Naive thymus-derived CD4-positive, alpha-beta T cell (primary cell): ENCODE measurements at regions of chr13 and their contacts with region 1.

Region 1: DNA sequence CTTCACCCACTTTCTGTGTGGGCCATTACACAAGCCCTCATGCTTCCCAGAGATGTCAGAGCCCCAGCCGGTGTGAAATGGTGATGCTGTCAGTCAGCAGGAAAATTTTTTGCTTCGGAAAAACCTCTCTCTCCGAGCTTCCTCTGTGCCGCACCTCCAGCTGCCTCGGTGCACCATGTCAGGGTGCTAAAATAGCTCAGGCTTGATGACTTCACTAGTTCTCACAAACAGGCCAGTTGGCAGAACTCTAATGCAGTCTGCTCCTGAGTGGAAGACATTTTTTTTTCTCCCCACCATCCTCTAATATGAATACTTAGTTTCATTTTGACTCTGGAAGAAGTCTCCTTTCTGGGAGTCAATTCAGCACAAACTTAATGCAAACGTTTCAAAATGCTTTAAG is 71.3 kb downstream of the KLF12 start:
- DNase-seq: peak in 1 of 9 donors; percentile 24
- ATAC-seq: peak; percentile 5
- H3K4me3 ChIP-seq: no peak overlapping the region
- H3K4me3 Mint-ChIP-seq: peak overlapping the region; percentile 26 to 80 (median 64)
- H3K27ac ChIP-seq: no peak overlapping the region
- H3K27ac Mint-ChIP-seq: peak overlapping the region; percentile 58 to 86 (median 81)
- H3K4me1 ChIP-seq: peaks cover 52 to 73% of the 10 kb centered on the region in 2 donors
- H3K4me1 Mint-ChIP-seq: peaks cover 50 to 95% (median 91%) of the 10 kb centered on the region in 7 donors
- H3K27me3 ChIP-seq: no peaks in the 10 kb centered on the region
- H3K27me3 Mint-ChIP-seq: no peaks in the 10 kb centered on the region

Region 2: DNA sequence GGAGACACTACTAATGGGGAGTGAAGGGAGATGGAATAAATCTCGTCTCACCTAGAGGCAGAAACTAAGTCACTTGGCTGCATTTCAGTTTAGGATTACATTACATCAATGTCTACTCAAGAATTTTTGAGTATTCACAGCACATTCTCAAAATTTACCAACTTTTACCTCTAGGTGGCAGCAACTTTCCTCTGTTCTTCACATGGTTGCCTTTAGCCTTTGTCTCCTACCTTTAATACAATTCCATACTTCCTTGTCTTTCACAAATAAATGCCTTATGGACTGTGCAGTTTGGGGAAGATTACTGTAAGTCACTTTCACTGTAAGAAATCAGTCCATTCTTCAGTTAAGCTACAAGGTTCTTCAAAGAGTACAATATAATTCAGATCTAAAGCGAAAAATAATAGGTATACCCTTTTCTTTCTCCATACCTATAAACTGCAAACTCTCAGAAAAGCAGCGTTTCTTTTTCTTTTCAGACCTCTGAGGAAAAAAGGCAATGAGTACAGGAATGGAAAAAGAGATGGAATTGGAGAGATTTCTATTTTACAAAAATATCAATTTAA is 308.1 kb before region 1 on chr13:
- CTCF ChIA-PET with region 1: no interaction called
- POLR2A ChIA-PET with region 1: no interaction called
- intact Hi-C with region 1: loop called in 1 of 2 experiments (anchors 5 kb)
- DNase-seq: peak in 7 of 9 donors; percentile 32 to 69 (median 59)
- ATAC-seq: peak; percentile 67
- H3K4me3 ChIP-seq: no peak overlapping the region
- H3K4me3 Mint-ChIP-seq: peak overlapping the region in 1 of 10 donors; percentile 5
- H3K27ac ChIP-seq: no peak overlapping the region
- H3K27ac Mint-ChIP-seq: peak overlapping the region; percentile 11 to 96 (median 79)
- H3K4me1 ChIP-seq: peaks cover 0 to 19% of the 10 kb centered on the region in 2 donors
- H3K4me1 Mint-ChIP-seq: peaks cover 13 to 76% (median 57%) of the 10 kb centered on the region in 7 donors
- H3K27me3 ChIP-seq: no peaks in the 10 kb centered on the region
- H3K27me3 Mint-ChIP-seq: no peaks in the 10 kb centered on the region

Region 3: GRCh38 chr13:74026753-74027152 is 36.2 kb before region 1 on chr13:
- CTCF ChIA-PET with region 1: interaction called, 3 read pairs
- POLR2A ChIA-PET with region 1: no interaction called
- intact Hi-C with region 1: loop called (anchors 5 kb)
- DNase-seq: peak; percentile 22 to 77 (median 68)
- ATAC-seq: peak; percentile 94
- H3K4me3 ChIP-seq: peak overlapping the region; percentile 21
- H3K4me3 Mint-ChIP-seq: peak overlapping the region; percentile 77 to 92 (median 84)
- H3K27ac ChIP-seq: peak overlapping the region; percentile 77
- H3K27ac Mint-ChIP-seq: peak overlapping the region; percentile 80 to 97 (median 94)
- H3K4me1 ChIP-seq: peaks cover 51 to 59% of the 10 kb centered on the region in 2 donors
- H3K4me1 Mint-ChIP-seq: peaks cover 36 to 97% (median 94%) of the 10 kb centered on the region in 7 donors
- H3K27me3 ChIP-seq: no peaks in the 10 kb centered on the region
- H3K27me3 Mint-ChIP-seq: no peaks in the 10 kb centered on the region

Region 4: DNA sequence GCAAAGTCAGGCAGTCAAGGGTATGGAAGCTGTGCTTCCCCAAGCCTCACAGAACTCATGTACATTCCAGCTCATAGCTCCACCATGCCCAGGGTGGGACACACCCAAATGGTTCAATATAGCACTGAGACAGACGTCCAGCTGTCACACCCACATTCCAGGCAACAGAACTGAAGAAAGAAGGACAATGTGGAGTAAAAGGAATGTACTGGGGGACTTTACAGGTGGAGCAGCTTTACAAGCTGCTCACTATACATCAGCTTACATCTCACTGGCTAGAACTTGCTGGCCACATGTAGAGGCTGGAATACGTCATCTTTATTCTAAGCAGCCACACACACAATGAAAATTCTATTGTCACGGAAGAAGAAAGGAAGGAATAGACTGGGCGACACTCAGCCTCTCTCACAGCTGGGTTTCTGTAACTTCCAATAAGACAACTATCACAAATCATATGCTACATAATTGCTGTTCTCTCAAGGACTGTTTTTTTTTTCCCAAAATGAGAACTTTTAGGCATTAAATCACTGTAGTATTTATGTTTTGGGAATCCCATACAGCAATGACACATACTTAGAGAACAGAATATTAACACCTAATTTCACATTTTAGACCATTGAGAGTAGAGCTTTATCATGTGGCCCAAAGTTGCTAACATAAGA is 14.9 kb before region 1 on chr13:
- CTCF ChIA-PET with region 1: no interaction called
- POLR2A ChIA-PET with region 1: interaction called, 3 read pairs
- intact Hi-C with region 1: loop called in 1 of 2 experiments (anchors 1 kb)
- DNase-seq: no peak
- ATAC-seq: no peak
- H3K4me3 ChIP-seq: no peak overlapping the region
- H3K4me3 Mint-ChIP-seq: no peak overlapping the region
- H3K27ac ChIP-seq: no peak overlapping the region
- H3K27ac Mint-ChIP-seq: peak overlapping the region in 6 of 9 donors; percentile 30 to 81 (median 34)
- H3K4me1 ChIP-seq: peaks cover 20 to 22% of the 10 kb centered on the region in 2 donors
- H3K4me1 Mint-ChIP-seq: peaks cover 41 to 89% (median 83%) of the 10 kb centered on the region in 7 donors
- H3K27me3 ChIP-seq: no peaks in the 10 kb centered on the region
- H3K27me3 Mint-ChIP-seq: no peaks in the 10 kb centered on the region

Region 5: DNA sequence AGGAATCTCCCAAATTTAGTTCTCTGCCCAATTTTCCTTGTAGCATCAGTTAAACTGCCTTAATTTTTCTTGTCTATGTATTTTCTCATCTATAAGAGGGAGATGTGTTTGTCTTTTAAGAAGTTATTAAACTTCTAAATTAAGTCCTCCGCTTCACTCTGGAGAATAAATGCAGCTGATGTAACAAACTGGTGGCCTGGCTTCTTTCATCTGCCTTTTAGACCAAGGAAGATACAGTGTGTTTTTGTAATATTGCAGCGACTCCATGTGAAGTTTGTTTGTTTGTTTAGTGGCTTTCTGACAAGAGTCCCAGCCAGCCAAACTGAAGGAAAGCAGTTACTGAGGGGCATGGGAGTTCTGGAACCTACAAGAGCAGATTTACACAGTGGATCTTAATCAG is 14.9 kb after region 1 on chr13:
- CTCF ChIA-PET with region 1: no interaction called
- POLR2A ChIA-PET with region 1: interaction called, 3 read pairs
- intact Hi-C with region 1: loop called in 1 of 2 experiments (anchors 2 kb)
- DNase-seq: no peak
- ATAC-seq: no peak
- H3K4me3 ChIP-seq: no peak overlapping the region
- H3K4me3 Mint-ChIP-seq: no peak overlapping the region
- H3K27ac ChIP-seq: no peak overlapping the region
- H3K27ac Mint-ChIP-seq: peak overlapping the region in 1 of 9 donors; percentile 44
- H3K4me1 ChIP-seq: peaks cover 31 to 32% of the 10 kb centered on the region in 2 donors
- H3K4me1 Mint-ChIP-seq: peaks cover 34 to 91% (median 84%) of the 10 kb centered on the region in 7 donors
- H3K27me3 ChIP-seq: no peaks in the 10 kb centered on the region
- H3K27me3 Mint-ChIP-seq: no peaks in the 10 kb centered on the region